A673 (cell line): ENCODE measurements at regions of chr17 and their contacts with region 1.

Region 1: GRCh38 chr17:80426681-80427326 is 11.8 kb downstream of the ENDOV start:
- DNase-seq: peak; percentile 79
- H3K4me3 ChIP-seq: no peak overlapping the region
- H3K27ac ChIP-seq: no peak overlapping the region
- H3K4me1 ChIP-seq: no peaks in the 10 kb centered on the region
- H3K27me3 ChIP-seq: no peaks in the 10 kb centered on the region
- CTCF ChIP-seq: peak; percentile 96

Region 2: DNA sequence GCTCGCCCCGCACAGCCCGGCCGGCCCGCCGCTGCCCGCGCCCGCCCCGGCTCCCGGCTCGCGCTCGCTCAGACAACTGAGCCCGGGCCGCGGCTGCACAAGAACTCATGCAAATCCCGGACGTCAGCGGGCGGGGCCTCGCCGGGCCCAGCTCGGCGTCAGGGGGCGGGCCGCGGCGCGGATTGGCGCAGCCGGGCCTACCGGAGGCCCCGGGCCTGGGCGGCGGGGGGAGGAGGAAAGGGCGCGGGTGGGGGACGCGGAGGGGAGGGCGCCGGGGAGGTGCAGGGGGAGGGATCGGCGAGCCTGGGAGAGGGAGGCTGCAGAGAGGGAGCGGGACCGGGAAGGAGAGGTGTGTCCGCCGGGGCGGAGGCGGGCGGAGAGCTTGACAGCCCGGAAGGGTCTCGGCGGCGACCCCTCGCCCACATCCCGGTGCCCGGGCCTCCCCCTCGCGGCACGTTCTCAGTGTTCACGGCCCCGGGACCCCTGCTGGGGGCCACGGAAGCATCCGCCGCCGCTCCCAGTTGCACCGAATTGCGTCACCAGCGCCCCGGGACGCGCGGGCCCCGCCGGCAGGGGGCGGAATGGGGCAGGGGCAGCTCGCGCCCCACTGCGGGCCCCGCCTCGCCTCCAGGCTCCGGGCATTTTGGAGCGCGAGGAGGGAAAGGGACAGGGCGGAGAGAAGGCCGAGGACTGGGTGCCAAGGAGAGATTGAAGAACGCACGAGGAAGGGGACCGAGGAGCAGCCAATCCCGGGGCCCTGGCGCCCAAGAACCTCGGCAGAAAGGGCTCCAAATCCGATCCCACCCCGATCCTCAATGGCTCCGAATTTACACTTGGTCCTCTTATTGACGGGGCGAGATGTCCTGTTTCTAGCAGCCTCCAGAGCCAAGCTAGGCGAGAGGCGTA is 587.2 kb before region 1 on chr17 and contains the start of gene CBX4:
- CTCF ChIA-PET with region 1: no interaction called
- POLR2A ChIA-PET with region 1: no interaction called
- intact Hi-C with region 1: no loop called
- DNase-seq: peak; percentile 97
- H3K4me3 ChIP-seq: peak within 1 kb of the TSS; percentile 59
- H3K27ac ChIP-seq: peak within 1 kb of the TSS; percentile 87
- H3K4me1 ChIP-seq: peaks cover 71% of the 10 kb centered on the region
- H3K27me3 ChIP-seq: peaks cover 42% of the 10 kb centered on the region
- CTCF ChIP-seq: peak; percentile 62
- total RNA-seq, gene CBX4: 42.6 and 45.5 TPM in 2 replicates

Region 3: DNA sequence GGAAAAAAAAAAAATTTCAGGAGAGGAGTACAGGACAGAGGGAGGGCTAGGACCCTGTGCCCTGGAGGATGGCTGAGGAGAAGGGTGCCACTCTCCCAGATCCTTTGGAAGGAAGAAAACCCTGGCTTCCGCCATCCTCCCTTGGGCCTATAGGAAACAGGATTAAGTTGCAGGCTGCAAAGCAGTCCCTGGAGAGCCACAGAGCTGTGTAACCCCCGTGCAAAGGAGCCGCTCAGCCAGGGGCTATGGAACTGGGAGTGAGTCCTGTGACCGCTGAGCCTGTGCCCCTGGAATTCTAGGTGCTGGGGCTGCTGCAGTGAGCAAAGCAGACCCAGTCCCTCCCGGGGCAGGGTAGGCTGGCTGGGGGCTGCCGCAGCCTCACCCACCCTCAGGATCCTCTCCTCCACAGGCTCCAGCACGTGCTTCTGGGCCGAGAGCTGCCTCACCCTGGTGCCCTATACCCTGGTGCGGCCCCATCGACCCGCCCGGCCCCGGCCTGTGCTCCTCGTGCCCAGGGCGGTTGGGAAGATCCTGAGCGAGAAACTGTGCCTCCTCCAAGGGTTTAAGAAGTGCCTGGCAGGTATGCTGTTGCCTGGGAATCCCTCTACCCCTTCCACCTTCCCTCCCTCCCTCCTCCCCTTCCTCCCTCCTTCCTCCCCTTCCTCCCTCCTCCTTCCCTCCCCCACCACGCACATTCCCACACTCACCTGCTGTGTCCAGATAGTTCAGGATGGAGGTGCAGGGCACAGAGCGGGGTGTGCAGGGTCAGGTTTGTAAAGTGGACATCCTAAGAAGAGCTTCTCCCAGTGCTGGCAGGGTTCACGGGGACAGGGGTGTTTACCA is 222.0 kb before region 1 on chr17:
- CTCF ChIA-PET with region 1: interaction called, 10 read pairs
- POLR2A ChIA-PET with region 1: no interaction called
- intact Hi-C with region 1: no loop called
- DNase-seq: peak; percentile 34
- H3K4me3 ChIP-seq: no peak overlapping the region
- H3K27ac ChIP-seq: no peak overlapping the region
- H3K4me1 ChIP-seq: peaks cover 9% of the 10 kb centered on the region
- H3K27me3 ChIP-seq: no peaks in the 10 kb centered on the region
- CTCF ChIP-seq: no peak

Region 4: GRCh38 chr17:80575057-80575875 is 148.5 kb after region 1 on chr17:
- CTCF ChIA-PET with region 1: interaction called, 3 read pairs
- POLR2A ChIA-PET with region 1: no interaction called
- intact Hi-C with region 1: loop called (anchors 1 kb)
- DNase-seq: peak; percentile 90
- H3K4me3 ChIP-seq: no peak overlapping the region
- H3K27ac ChIP-seq: no peak overlapping the region
- H3K4me1 ChIP-seq: no peaks in the 10 kb centered on the region
- H3K27me3 ChIP-seq: no peaks in the 10 kb centered on the region
- CTCF ChIP-seq: peak; percentile 100

Region 5: DNA sequence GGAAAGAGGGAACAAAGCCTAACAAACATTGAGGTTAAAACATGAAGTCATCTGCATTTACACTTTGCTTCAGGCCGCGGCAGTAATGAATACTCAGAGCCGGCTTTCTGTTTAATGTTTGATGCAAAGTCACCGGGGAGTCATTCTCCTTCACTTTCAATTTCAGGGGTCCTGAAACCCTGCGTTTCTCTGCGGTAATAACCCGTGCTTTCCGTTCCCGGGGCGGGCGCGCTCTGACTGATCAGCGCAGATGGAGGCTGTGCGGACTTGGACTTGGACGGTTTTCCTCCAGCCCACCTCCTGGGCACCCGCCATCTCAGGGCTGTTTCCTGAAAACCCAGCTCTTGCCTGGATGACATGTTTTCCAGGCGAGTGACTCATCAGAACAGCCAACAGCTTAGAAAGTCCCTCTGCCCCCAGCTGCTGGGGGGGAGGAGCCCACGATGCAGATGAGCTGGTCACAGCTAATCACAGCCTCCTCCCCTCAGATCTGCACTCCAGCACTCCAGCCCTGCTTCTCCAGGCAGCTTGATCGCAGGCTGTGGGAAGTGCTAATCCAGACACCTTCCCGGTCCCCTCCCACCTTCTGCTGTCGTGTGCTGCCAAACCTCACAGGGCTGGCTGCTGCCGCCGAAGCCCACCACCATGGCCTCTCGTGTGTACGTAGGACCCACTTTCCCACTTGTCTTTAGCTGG is 406.2 kb after region 1 on chr17:
- CTCF ChIA-PET with region 1: no interaction called
- POLR2A ChIA-PET with region 1: no interaction called
- intact Hi-C with region 1: no loop called
- DNase-seq: peak; percentile 98
- H3K4me3 ChIP-seq: peak overlapping the region; percentile 40
- H3K27ac ChIP-seq: peak overlapping the region; percentile 83
- H3K4me1 ChIP-seq: peaks cover 26% of the 10 kb centered on the region
- H3K27me3 ChIP-seq: no peaks in the 10 kb centered on the region
- CTCF ChIP-seq: no peak

Region 6: GRCh38 chr17:80899402-80900268 is 472.8 kb after region 1 on chr17:
- CTCF ChIA-PET with region 1: interaction called, 5 read pairs
- POLR2A ChIA-PET with region 1: no interaction called
- intact Hi-C with region 1: loop called (anchors 5 kb)
- DNase-seq: peak; percentile 51
- H3K4me3 ChIP-seq: no peak overlapping the region
- H3K27ac ChIP-seq: no peak overlapping the region
- H3K4me1 ChIP-seq: no peaks in the 10 kb centered on the region
- H3K27me3 ChIP-seq: no peaks in the 10 kb centered on the region
- CTCF ChIP-seq: peak; percentile 72

Region 7: GRCh38 chr17:80970044-80970761 is 543.4 kb after region 1 on chr17:
- CTCF ChIA-PET with region 1: interaction called, 10 read pairs
- POLR2A ChIA-PET with region 1: no interaction called
- intact Hi-C with region 1: no loop called
- DNase-seq: peak; percentile 41
- H3K4me3 ChIP-seq: no peak overlapping the region
- H3K27ac ChIP-seq: no peak overlapping the region
- H3K4me1 ChIP-seq: peaks cover 9% of the 10 kb centered on the region
- H3K27me3 ChIP-seq: no peaks in the 10 kb centered on the region
- CTCF ChIP-seq: peak; percentile 56

Region 8: GRCh38 chr17:80981062-80981902 is 554.5 kb after region 1 on chr17:
- CTCF ChIA-PET with region 1: interaction called, 7 read pairs
- POLR2A ChIA-PET with region 1: no interaction called
- intact Hi-C with region 1: loop called (anchors 1 kb)
- DNase-seq: no peak
- H3K4me3 ChIP-seq: peak overlapping the region; percentile 35
- H3K27ac ChIP-seq: no peak overlapping the region
- H3K4me1 ChIP-seq: no peaks in the 10 kb centered on the region
- H3K27me3 ChIP-seq: no peaks in the 10 kb centered on the region
- CTCF ChIP-seq: peak; percentile 65